Uterus (tissue), 4 donors: ENCODE measurements at regions of chr22 and their contacts with region 1.

Region 1: GRCh38 chr22:49929208-49930136 is 11.0 kb downstream of the CRELD2 start:
- DNase-seq: peak; percentile 46 to 63
- H3K4me3 ChIP-seq: no peak overlapping the region
- H3K27ac ChIP-seq: no peak overlapping the region
- H3K4me1 ChIP-seq: peaks cover 0 to 15% of the 10 kb centered on the region in 2 donors
- H3K27me3 ChIP-seq: peaks cover 0 to 7% of the 10 kb centered on the region in 2 donors
- CTCF ChIP-seq: peak; percentile 62 to 99 (median 97)
- POLR2A ChIP-seq: peak in 1 of 2 donors; percentile 33

Region 2: GRCh38 chr22:49657275-49657975 is 272.0 kb before region 1 on chr22:
- intact Hi-C with region 1: no loop called
- DNase-seq: peak; percentile 46 to 79
- H3K4me3 ChIP-seq: peak overlapping the region; percentile 22 to 33
- H3K27ac ChIP-seq: peak overlapping the region; percentile 59 to 67
- H3K4me1 ChIP-seq: no peaks in the 10 kb centered on the region
- H3K27me3 ChIP-seq: no peaks in the 10 kb centered on the region
- CTCF ChIP-seq: no peak
- POLR2A ChIP-seq: no peak

Region 3: DNA sequence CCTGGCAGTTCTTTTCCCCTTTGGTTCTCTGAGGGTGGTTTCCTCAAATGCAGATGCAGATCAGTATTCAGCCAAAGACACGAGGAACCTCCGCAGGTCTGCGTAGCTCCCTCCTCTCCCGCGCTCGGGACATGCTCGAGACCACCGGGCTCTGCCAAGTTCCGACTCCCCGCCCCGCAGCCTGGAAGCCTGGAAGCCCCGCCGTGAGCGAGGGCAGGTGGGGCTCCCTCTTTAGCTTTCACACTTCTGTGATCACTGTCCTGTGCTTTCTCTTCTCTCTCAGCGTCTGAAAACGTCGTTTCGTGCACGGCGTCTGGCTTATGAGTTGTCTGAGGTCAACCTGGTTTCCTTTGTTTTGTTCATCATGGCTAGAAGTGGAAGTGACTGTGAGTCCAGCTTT is 49.2 kb before region 1 on chr22:
- intact Hi-C with region 1: no loop called
- DNase-seq: no peak
- H3K4me3 ChIP-seq: no peak overlapping the region
- H3K27ac ChIP-seq: no peak overlapping the region
- H3K4me1 ChIP-seq: no peaks in the 10 kb centered on the region
- H3K27me3 ChIP-seq: no peaks in the 10 kb centered on the region
- CTCF ChIP-seq: no peak
- POLR2A ChIP-seq: no peak

Region 4: DNA sequence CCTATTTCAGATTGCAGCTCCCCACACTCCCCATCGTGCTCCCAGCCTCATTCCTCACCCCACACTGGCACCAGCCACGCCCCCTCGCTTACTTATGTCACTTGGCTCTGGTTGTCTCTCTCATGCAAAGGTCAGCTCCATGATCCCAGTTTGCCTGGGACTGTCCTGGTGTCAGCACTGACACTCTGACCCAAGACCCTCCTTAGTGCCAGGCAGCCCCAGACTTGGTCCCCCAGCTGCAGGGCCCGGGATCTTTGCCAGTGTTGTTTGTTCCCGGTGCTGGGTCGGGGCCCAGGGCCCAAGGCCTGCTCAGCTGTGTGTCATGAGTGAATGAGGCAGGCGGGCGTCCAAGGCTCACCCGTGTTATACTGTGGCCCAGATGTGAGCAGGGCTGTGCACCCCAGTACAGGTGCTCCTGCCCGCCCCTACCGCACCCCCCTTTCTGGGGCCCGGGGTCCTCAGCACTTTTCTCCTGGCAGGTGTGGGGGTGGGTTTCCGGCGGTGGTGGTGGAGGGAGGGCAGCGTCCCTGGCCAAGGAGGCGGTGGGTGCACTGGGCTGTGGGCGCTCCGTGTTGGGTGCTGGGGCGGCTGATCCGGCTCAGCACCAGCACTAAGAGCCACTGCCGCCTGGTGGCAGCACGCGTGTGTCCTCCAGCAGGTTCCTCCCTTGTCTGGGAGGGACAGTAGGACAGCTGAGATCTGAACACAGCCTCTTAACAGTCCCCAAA is 63.6 kb after region 1 on chr22:
- intact Hi-C with region 1: no loop called
- DNase-seq: peak in 1 of 2 donors; percentile 31
- H3K4me3 ChIP-seq: no peak overlapping the region
- H3K27ac ChIP-seq: no peak overlapping the region
- H3K4me1 ChIP-seq: no peaks in the 10 kb centered on the region
- H3K27me3 ChIP-seq: no peaks in the 10 kb centered on the region
- CTCF ChIP-seq: peak; percentile 34 to 68 (median 54)
- POLR2A ChIP-seq: no peak

Region 5: GRCh38 chr22:50027639-50028537 is 98.4 kb after region 1 on chr22:
- intact Hi-C with region 1: loop called (anchors 2 kb)
- DNase-seq: no peak
- H3K4me3 ChIP-seq: no peak overlapping the region
- H3K27ac ChIP-seq: no peak overlapping the region
- H3K4me1 ChIP-seq: peaks cover 0 to 5% of the 10 kb centered on the region in 2 donors
- H3K27me3 ChIP-seq: peaks cover 0 to 6% of the 10 kb centered on the region in 2 donors
- CTCF ChIP-seq: no peak
- POLR2A ChIP-seq: no peak

Region 6: GRCh38 chr22:50200461-50201190 is 271.2 kb after region 1 on chr22 and contains the start of gene SELENOO:
- intact Hi-C with region 1: loop called (anchors 10 kb)
- DNase-seq: peak; percentile 90 to 93
- H3K4me3 ChIP-seq: peak within 1 kb of the TSS; percentile 60 to 92
- H3K27ac ChIP-seq: peak within 1 kb of the TSS; percentile 70 to 81
- H3K4me1 ChIP-seq: no peaks in the 10 kb centered on the region
- H3K27me3 ChIP-seq: no peaks in the 10 kb centered on the region
- CTCF ChIP-seq: peak in 1 of 4 experiments; percentile 6
- POLR2A ChIP-seq: peak; percentile 74 to 91
- total RNA-seq, gene SELENOO: 1.5 to 22.1 (median 10.0) TPM